ENCODE measurements at regions of chr11 and their contacts with region 1.

Region 1: DNA sequence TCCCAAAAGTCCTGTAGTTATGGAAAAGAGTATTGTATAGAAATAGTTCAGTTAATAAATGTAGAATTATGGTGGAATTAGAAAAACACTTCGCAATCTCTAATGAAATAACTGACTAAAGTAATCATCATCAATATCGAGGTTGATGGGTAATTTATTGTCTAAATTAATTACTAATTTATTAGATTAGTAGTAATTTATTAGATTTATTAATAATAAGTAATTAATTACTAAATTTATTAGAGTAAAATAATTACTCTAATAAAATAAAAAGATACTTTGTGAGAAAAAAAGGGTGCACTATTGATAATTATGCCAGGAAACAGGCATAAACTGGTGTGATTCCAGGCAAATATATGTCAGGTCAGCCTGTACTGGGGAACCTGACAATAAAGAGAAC is 455.6 kb downstream of the AASDHPPT start:
- DNase-seq: no peak
- ATAC-seq: no peak
- H3K4me3 ChIP-seq: no peak overlapping the region
- H3K4me3 Mint-ChIP-seq: no peak overlapping the region
- H3K27ac ChIP-seq: no peak overlapping the region
- H3K27ac Mint-ChIP-seq: no peak overlapping the region
- H3K4me1 ChIP-seq: no peaks in the 10 kb centered on the region
- H3K4me1 Mint-ChIP-seq: no peaks in the 10 kb centered on the region
- H3K27me3 ChIP-seq: no peaks in the 10 kb centered on the region
- H3K27me3 Mint-ChIP-seq: no peaks in the 10 kb centered on the region

Region 2: DNA sequence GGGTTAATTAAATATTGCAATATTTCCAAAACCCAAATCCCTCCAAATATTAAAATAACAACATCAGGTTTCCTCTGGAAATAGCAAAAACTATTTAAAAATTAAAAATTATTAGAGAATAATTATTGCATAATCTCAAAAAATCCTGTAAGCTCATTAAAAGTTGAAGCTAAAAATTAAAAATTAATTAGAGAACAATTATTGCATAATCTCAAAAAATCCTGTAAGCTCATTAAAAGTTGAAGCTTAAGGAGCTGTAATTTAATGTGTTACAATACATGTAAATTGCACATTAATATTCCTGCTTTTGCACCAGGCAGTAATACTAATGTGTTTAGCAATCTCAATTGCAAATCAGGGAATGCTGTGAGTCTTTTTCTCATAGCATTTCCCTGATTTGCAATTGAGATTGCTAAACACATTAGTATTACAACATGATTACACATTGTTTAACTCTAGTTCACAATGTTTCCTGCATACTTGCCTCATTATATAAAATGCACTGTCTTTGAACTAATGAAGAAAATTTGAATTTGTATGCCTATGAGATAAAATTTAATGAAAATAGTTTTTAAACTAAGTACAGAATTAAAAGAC is 237.5 kb after region 1 on chr11:
- CTCF ChIA-PET with region 1: no interaction called
- POLR2A ChIA-PET with region 1: no interaction called
- intact Hi-C with region 1: loop called in 1 of 2 experiments (anchors 2 kb)
- DNase-seq: no peak
- ATAC-seq: no peak
- H3K4me3 ChIP-seq: no peak overlapping the region
- H3K4me3 Mint-ChIP-seq: no peak overlapping the region
- H3K27ac ChIP-seq: no peak overlapping the region
- H3K27ac Mint-ChIP-seq: no peak overlapping the region
- H3K4me1 ChIP-seq: no peaks in the 10 kb centered on the region
- H3K4me1 Mint-ChIP-seq: no peaks in the 10 kb centered on the region
- H3K27me3 ChIP-seq: no peaks in the 10 kb centered on the region
- H3K27me3 Mint-ChIP-seq: no peaks in the 10 kb centered on the region